CD4-positive, alpha-beta T cell (primary cell): ENCODE measurements at regions of chr6 and their contacts with region 1.

Region 1: DNA sequence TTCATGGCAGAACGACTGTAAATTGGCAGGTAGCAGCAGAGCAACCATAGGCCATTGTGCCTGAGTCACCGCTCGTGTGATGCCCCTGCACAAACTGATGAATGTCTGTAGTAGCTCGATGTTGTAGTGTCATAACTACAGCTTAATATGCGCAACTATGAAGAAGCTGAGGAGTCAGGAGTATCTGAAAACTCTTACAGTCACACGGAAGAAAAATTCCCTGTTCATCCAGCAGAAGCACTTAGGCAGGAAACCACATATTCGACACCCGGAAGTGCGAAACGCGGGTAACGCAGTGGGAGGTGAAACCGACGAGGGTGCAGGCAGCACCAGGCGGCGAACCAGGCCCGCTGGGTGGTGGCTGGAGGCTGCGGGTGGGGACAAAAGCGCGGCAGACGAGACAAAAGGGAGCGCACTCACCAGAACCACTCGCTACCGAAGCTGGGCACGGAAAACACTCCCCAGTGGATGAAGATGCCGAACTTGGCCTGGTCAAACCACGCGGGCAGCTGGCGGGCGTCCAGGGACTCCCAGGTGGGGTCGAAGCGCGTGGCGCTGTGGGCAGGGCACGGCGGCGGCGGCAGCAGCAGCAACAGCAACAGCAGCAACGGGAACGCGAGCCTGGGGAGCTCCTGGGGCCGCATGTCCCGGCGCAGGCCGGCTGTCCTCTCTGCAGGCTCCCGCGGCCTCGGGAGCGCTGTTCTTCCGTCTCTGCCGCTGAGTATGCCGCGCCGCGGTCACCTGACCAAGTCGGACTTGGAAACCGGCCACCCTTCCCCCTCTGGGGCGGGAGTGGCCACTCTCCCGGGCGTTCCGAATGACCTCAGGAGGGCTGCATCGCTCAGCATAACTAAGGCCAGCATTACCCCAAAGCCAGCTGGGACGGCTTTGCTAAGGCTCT is at the start of gene FUCA2:
- DNase-seq: peak; percentile 42 to 86 (median 62)
- ATAC-seq: peak; percentile 84
- H3K4me3 ChIP-seq: peak within 1 kb of the TSS; percentile 66
- H3K4me3 Mint-ChIP-seq: peak within 1 kb of the TSS; percentile 96
- H3K27ac ChIP-seq: peak within 1 kb of the TSS; percentile 31 to 46
- H3K27ac Mint-ChIP-seq: peak within 1 kb of the TSS; percentile 90
- H3K4me1 ChIP-seq: peaks cover 25% of the 10 kb centered on the region
- H3K4me1 Mint-ChIP-seq: peaks cover 23% of the 10 kb centered on the region
- H3K27me3 ChIP-seq: no peaks in the 10 kb centered on the region
- H3K27me3 Mint-ChIP-seq: no peaks in the 10 kb centered on the region
- CTCF ChIP-seq: no peak
- total RNA-seq, gene FUCA2: 1.1 to 1.5 TPM

Region 2: GRCh38 chr6:143450453-143451371 is 60.5 kb before region 1 on chr6 and contains the starts of genes ADAT2 and PEX3:
- CTCF ChIA-PET with region 1: no interaction called
- POLR2A ChIA-PET with region 1: interaction called, 11 read pairs
- intact Hi-C with region 1: no loop called
- DNase-seq: peak; percentile 85 to 97 (median 90)
- ATAC-seq: peak; percentile 90
- H3K4me3 ChIP-seq: peak within 1 kb of the TSS; percentile 72
- H3K4me3 Mint-ChIP-seq: peak within 1 kb of the TSS; percentile 99
- H3K27ac ChIP-seq: peak within 1 kb of the TSS; percentile 72 to 78
- H3K27ac Mint-ChIP-seq: peak within 1 kb of the TSS; percentile 94
- H3K4me1 ChIP-seq: peaks cover 15% of the 10 kb centered on the region
- H3K4me1 Mint-ChIP-seq: peaks cover 60% of the 10 kb centered on the region
- H3K27me3 ChIP-seq: no peaks in the 10 kb centered on the region
- H3K27me3 Mint-ChIP-seq: no peaks in the 10 kb centered on the region
- CTCF ChIP-seq: no peak
- total RNA-seq, gene ADAT2: 14.6 to 17.4 TPM
- total RNA-seq, gene PEX3: 7.3 to 9.7 TPM

Region 3: GRCh38 chr6:144013486-144013909 is 502.3 kb after region 1 on chr6:
- CTCF ChIA-PET with region 1: interaction called, 3 read pairs
- POLR2A ChIA-PET with region 1: no interaction called
- intact Hi-C with region 1: loop called in 1 of 2 experiments (anchors 1 kb)
- DNase-seq: peak; percentile 43 to 80 (median 55)
- ATAC-seq: peak; percentile 52
- H3K4me3 ChIP-seq: no peak overlapping the region
- H3K4me3 Mint-ChIP-seq: no peak overlapping the region
- H3K27ac ChIP-seq: no peak overlapping the region
- H3K27ac Mint-ChIP-seq: no peak overlapping the region
- H3K4me1 ChIP-seq: peaks cover 1% of the 10 kb centered on the region
- H3K4me1 Mint-ChIP-seq: no peaks in the 10 kb centered on the region
- H3K27me3 ChIP-seq: peaks cover 0 to 2% of the 10 kb centered on the region in 2 experiments
- H3K27me3 Mint-ChIP-seq: peaks cover 27% of the 10 kb centered on the region
- CTCF ChIP-seq: peak; percentile 98